ENCODE measurements at regions of chr6 and their contacts with region 1.

Region 1: GRCh38 chr6:34223956-34224940 is 12.4 kb upstream of the HMGA1 start:
- DNase-seq: peak; percentile 63
- H3K4me3 ChIP-seq: peak overlapping the region; percentile 58
- CTCF ChIP-seq: no peak

Region 2: DNA sequence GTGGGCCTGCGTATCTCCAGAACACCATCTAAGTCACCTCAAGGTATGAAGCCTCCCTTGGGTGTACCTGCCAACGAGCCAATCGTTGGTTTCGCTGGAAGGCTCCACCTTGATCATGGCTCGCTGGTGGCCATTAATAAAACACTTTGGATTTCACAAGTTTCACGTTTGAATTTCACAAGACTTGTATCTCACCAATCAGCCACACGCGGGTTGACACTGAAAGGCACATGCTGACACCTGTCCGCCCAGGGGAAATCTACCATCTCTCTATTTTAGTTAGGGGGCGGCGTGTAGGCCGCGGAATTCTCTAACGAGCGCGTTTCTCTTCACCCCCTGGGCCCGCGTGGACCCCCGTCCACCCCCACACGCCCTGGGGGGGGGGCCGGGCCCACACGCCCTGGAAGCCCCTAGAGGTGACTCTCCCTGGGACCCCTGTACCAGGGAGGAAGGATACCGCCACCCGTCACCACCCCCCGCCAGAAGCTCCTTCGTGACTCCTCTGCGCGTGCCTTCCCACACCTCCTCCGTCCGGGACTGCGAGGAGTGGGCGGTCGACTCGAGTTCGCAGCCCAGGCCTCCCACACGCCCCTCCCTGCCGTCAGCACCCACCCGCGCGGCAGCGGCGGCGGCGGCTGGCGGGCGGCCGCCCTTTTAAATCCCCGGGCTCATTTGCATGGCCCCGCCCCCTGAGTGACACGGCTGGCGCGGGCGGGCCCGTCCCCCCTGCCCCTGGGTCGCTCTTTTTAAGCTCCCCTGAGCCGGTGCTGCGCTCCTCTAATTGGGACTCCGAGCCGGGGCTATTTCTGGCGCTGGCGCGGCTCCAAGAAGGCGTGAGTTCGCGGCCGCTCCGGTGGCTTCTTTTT is 12.1 kb after region 1 on chr6 and contains the start of gene HMGA1:
- CTCF ChIA-PET with region 1: interaction called, 4 read pairs
- POLR2A ChIA-PET with region 1: interaction called, 25 read pairs
- DNase-seq: no peak
- H3K4me3 ChIP-seq: peak within 1 kb of the TSS; percentile 69
- CTCF ChIP-seq: no peak